ENCODE measurements at regions of chr9 and their contacts with region 1.

Region 1: DNA sequence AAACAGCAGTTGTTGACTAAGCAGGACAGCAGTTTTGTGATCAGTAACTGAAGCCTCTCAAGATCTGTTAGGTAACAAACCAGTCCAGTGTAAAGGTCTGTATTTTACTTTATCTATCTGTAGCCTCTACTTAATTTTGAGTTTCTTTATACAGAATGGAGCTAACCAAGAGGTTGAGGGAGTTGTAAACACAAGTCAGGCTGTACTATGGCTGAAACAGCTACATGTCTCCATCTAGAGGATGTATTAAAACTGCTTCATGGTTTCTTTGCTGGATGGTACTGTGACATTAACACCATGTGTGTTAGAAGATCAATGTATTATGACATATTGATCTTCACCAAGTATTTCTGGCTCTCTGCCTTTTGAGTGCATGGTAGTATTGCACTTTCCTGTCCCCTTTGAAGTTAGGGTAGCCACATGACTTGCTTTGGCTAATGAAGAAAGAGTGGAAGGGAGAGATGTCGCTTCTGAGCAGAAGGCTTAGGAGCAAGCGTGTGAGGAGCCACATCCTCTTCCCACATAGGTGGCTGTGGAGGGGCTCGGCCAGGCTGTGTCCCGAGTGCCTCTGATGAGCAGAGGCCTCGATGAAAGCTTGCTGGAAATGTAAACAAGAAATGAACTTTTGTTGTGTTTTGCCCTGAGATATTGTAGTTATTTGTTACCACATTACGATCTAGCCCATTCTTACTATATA is 105.6 kb upstream of the PCA3 start:
- DNase-seq: no peak
- H3K4me3 ChIP-seq: no peak overlapping the region
- H3K27ac ChIP-seq: peak overlapping the region in 1 of 4 donors; percentile 24
- H3K4me1 ChIP-seq: peaks cover 0 to 35% (median 8%) of the 10 kb centered on the region in 4 donors
- H3K27me3 ChIP-seq: no peaks in the 10 kb centered on the region
- CTCF ChIP-seq: peak; percentile 29 to 72 (median 55)
- EP300 ChIP-seq: no peak
- POLR2A ChIP-seq: no peak

Region 2: GRCh38 chr9:76403352-76403751 is 255.3 kb before region 1 on chr9:
- in situ Hi-C with region 1: loop called in 1 of 4 experiments (anchors 10 kb)
- intact Hi-C with region 1: no loop called
- DNase-seq: no peak
- H3K4me3 ChIP-seq: peak overlapping the region in 1 of 4 donors; percentile 12
- H3K27ac ChIP-seq: peak overlapping the region; percentile 36 to 70 (median 64)
- H3K4me1 ChIP-seq: peaks cover 3 to 24% (median 16%) of the 10 kb centered on the region in 4 donors
- H3K27me3 ChIP-seq: no peaks in the 10 kb centered on the region
- CTCF ChIP-seq: peak; percentile 44 to 81 (median 53)
- EP300 ChIP-seq: no peak
- POLR2A ChIP-seq: no peak

Region 3: DNA sequence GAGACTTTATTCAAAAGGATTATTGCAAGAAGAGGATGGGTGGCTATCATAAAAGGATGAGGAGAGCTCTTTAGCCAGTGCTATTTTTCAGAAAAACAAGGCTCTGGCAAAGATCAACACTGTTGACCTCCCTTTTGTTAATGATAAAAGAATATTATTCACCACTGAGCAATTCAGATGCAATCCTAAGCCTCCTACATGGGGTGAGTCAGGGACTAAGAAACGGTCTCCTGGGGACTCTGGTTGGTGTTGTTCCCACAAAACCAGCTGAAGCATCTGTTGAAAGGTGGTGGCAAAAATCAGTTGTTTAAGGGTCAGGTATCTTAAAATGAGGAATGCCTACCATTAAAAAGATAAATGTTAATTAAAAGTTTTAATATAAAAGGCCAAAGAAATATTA is 207.4 kb before region 1 on chr9:
- in situ Hi-C with region 1: loop called in 3 of 4 experiments (anchors 5 to 10 kb)
- intact Hi-C with region 1: no loop called
- DNase-seq: no peak
- H3K4me3 ChIP-seq: no peak overlapping the region
- H3K27ac ChIP-seq: no peak overlapping the region
- H3K4me1 ChIP-seq: peaks cover 0 to 21% (median 7%) of the 10 kb centered on the region in 4 donors
- H3K27me3 ChIP-seq: no peaks in the 10 kb centered on the region
- CTCF ChIP-seq: no peak
- EP300 ChIP-seq: no peak
- POLR2A ChIP-seq: no peak

Region 4: DNA sequence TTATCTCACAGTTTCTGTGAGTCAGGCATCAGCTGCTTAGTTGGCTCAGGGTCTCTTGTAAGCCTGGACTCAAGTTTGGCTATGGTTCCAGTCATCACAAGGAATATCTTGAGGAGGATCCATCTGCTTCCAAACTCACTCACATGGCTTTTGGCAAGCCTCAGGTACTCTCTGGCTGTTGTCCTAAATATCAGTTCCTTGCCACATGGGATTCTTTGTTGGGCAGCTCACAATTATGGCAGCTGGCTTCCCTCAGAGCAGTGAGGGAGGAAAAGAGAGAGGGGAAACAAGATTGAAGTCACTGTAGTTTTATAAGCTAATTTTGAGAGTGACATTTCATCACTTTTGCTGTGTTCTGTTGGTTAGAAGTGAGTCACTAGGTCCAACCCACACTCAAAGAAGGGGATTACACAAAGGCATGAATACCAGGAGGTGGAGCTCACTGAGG is 55.2 kb before region 1 on chr9:
- in situ Hi-C with region 1: no loop called
- intact Hi-C with region 1: no loop called
- DNase-seq: no peak
- H3K4me3 ChIP-seq: no peak overlapping the region
- H3K27ac ChIP-seq: no peak overlapping the region
- H3K4me1 ChIP-seq: peaks cover 0 to under 1% (median 0%) of the 10 kb centered on the region in 4 donors
- H3K27me3 ChIP-seq: no peaks in the 10 kb centered on the region
- CTCF ChIP-seq: no peak
- EP300 ChIP-seq: no peak
- POLR2A ChIP-seq: no peak

Measured in transverse colon (tissue), 4 donors.